ENCODE measurements at regions of chr1 and their contacts with region 1.

Region 1: DNA sequence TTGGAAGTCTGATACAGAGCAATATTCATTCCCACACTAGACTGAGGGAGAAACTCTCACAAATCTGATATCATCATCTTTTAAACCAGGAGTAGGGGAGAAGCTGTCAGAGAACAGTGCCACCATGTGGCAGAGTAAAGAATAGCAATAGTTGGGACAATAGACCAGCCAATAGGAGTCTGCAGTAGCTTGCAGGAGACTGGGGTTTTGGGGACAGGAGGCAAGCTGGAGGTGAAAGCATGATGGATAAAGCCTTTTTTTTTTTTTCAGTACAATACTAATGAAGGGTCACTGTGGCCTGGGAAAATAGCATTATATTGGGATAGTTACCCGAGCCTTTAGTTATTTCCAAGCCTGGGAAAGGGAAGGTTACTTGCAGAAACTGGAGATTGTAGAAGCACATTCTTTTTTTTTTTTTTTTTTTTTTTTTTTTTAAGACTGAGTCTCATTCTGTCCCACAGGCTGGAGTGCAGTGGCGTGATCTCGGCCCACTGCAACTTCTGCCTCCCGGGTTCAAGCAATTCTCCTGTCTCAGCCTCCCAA is 120.7 kb downstream of the S1PR1 start:
- DNase-seq: no peak
- ATAC-seq: peak; percentile 99
- H3K4me3 Mint-ChIP-seq: no peak overlapping the region
- H3K27ac Mint-ChIP-seq: no peak overlapping the region
- H3K4me1 Mint-ChIP-seq: peaks cover 9% of the 10 kb centered on the region
- H3K27me3 Mint-ChIP-seq: no peaks in the 10 kb centered on the region
- CTCF ChIP-seq: no peak

Region 2: DNA sequence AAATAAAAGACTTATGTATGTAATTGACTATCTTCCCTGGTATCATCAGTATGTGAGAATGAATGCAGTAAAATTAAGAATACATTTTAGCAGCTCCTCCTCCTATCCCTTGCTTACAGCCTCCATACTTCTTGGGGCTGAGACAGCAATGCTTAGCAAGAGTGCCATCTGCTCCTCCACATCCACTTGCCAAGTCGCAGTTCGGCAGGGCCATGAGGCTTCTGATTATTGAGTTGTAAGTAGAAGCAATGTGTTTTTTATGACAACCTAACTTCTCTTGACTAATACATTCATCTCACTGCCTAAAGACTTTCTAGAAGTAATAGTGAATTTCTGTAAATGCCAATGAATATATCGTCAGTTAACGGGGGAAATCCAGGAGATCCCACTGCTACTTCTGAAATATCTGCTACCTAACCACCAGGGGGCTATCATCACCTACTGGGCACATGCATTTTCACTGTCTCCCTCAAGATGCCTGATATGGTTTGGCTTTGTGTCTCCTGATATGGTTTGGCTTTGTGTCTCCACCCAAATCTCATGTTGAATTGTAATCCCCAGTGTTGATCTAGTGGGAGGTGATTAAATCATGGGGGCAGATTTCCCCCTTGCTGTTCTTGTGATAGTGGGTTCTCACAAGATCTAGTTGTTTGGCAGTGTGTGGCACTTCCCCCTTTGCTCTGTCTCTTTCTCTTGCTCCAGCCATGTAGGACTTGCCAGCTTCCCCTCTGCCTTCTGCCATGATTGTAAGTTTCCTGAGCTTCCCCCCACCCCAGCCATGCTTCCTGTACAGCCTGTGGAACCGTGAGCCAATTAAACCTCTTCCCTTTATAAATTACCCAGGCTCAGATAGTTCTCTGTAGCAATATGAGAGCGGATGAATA is 522.5 kb before region 1 on chr1:
- CTCF ChIA-PET with region 1: no interaction called
- POLR2A ChIA-PET with region 1: no interaction called
- intact Hi-C with region 1: loop called (anchors 1 kb)
- DNase-seq: no peak
- ATAC-seq: no peak
- H3K4me3 Mint-ChIP-seq: no peak overlapping the region
- H3K27ac Mint-ChIP-seq: no peak overlapping the region
- H3K4me1 Mint-ChIP-seq: no peaks in the 10 kb centered on the region
- H3K27me3 Mint-ChIP-seq: peaks cover 2% of the 10 kb centered on the region
- CTCF ChIP-seq: no peak

Region 3: GRCh38 chr1:100921109-100921706 is 436.3 kb before region 1 on chr1:
- CTCF ChIA-PET with region 1: interaction called, 17 read pairs
- POLR2A ChIA-PET with region 1: interaction called, 8 read pairs
- intact Hi-C with region 1: loop called (anchors 1 kb)
- DNase-seq: no peak
- ATAC-seq: no peak
- H3K4me3 Mint-ChIP-seq: no peak overlapping the region
- H3K27ac Mint-ChIP-seq: no peak overlapping the region
- H3K4me1 Mint-ChIP-seq: peaks cover 24% of the 10 kb centered on the region
- H3K27me3 Mint-ChIP-seq: no peaks in the 10 kb centered on the region
- CTCF ChIP-seq: peak; percentile 98

Region 4: DNA sequence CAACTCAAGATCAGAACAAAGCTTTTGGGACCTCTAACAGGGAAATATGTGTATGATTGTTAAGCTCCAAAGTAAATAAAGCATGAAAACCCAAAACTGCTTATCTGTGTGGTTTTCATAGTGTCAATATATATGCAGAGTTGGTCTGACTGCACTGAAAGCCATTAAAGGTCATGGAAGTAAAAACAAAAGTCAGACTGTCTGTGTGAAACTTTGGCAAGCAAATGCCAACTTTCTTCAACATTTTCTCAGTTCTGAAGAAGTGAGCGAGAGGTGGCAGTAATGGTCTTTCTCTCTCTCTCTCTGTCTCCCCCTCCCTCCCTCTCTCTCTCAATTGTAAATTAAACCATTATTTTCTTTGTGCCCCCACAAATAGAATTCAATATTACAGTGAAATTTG is 220.8 kb before region 1 on chr1:
- CTCF ChIA-PET with region 1: interaction called, 5 read pairs
- POLR2A ChIA-PET with region 1: no interaction called
- intact Hi-C with region 1: loop called (anchors 1 kb)
- DNase-seq: no peak
- ATAC-seq: peak; percentile 80
- H3K4me3 Mint-ChIP-seq: peak overlapping the region; percentile 12
- H3K27ac Mint-ChIP-seq: peak overlapping the region; percentile 10
- H3K4me1 Mint-ChIP-seq: peaks cover 52% of the 10 kb centered on the region
- H3K27me3 Mint-ChIP-seq: no peaks in the 10 kb centered on the region
- CTCF ChIP-seq: no peak

Region 5: GRCh38 chr1:101293461-101294051 is 64.0 kb before region 1 on chr1:
- CTCF ChIA-PET with region 1: interaction called, 22 read pairs
- POLR2A ChIA-PET with region 1: interaction called, 6 read pairs
- intact Hi-C with region 1: loop called (anchors 1 kb)
- DNase-seq: no peak
- ATAC-seq: peak; percentile 80
- H3K4me3 Mint-ChIP-seq: peak overlapping the region; percentile 47
- H3K27ac Mint-ChIP-seq: peak overlapping the region; percentile 88
- H3K4me1 Mint-ChIP-seq: peaks cover 60% of the 10 kb centered on the region
- H3K27me3 Mint-ChIP-seq: no peaks in the 10 kb centered on the region
- CTCF ChIP-seq: no peak

Region 6: GRCh38 chr1:101309334-101310311 is 47.9 kb before region 1 on chr1:
- CTCF ChIA-PET with region 1: interaction called, 45 read pairs
- POLR2A ChIA-PET with region 1: interaction called, 6 read pairs
- intact Hi-C with region 1: loop called (anchors 1 kb)
- DNase-seq: peak; percentile 57
- ATAC-seq: peak; percentile 75
- H3K4me3 Mint-ChIP-seq: peak overlapping the region; percentile 82
- H3K27ac Mint-ChIP-seq: peak overlapping the region; percentile 94
- H3K4me1 Mint-ChIP-seq: peaks cover 78% of the 10 kb centered on the region
- H3K27me3 Mint-ChIP-seq: no peaks in the 10 kb centered on the region
- CTCF ChIP-seq: peak; percentile 77

Region 7: DNA sequence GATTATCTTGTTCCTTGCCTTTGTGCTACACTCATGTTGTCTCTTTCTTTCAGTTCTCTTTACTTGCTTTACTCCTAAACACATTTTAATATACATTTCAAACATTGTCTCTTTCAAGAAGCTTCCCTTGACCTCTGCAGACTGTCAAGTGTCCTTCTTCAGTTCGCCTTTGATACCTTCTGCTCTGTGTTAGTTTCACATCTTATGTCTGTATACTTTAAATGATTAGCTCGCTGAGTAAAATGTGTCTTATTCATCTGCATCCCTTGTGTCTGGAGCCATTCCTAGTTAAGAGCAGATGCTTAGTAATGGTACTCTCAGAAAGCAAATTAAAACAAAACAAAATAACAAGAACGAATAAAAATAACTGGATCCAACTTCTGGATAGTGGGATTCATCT is 182.6 kb after region 1 on chr1:
- CTCF ChIA-PET with region 1: no interaction called
- POLR2A ChIA-PET with region 1: no interaction called
- intact Hi-C with region 1: no loop called
- DNase-seq: no peak
- ATAC-seq: no peak
- H3K4me3 Mint-ChIP-seq: no peak overlapping the region
- H3K27ac Mint-ChIP-seq: no peak overlapping the region
- H3K4me1 Mint-ChIP-seq: no peaks in the 10 kb centered on the region
- H3K27me3 Mint-ChIP-seq: peaks cover 15% of the 10 kb centered on the region
- CTCF ChIP-seq: no peak

Measured in activated B cell treated with CpG ODN at 0.5 μM for 24 hours (primary cell).